H1 (cell line): ENCODE measurements at regions of chr11 and their contacts with region 1.

Region 1: DNA sequence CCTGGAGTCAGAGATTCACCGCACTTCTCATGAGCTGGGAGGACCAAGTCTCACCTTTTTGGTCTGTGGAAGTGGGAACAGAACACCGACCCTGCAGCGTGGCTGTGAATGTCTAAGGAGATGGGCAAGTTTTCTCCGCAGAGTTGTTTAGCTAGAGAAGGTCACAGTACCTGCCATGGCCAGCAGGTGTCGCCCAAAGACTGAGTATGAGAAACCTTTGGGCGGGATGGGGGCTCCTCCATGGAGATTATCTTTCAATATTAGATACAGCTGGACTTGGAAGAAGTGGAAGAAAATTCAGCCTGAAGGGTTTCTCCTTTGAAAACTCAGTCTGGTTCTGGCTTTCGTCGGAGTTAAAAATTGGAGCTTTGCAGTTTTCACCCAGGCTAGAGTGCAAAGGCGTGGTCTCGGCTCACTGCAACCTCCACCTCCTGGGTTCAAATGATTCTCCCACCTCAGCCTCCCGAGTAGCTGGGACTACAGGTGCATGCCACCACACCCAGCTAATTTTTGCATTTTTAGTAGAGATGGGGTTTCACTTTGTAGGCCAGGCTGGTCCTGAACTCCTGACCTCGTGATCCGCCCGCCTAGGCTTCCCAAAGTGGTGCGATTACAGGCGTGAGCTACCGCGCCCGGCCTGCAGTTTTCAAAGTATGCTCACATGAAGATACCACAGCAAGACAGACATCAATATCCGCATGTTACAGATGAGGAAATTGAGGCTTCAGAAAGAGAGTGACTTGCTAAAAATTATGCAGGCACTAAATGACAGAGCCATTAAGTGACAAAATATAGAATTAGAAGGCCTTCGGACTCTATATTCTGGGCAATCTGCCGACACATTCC is 10.7 kb upstream of the DSCAML1 start:
- DNase-seq: peak in 1 of 2 experiments; percentile 92
- H3K4me3 ChIP-seq: no peak overlapping the region
- H3K27ac ChIP-seq: no peak overlapping the region
- H3K4me1 ChIP-seq: no peaks in the 10 kb centered on the region; a peak in 1 of 7 replicates
- H3K27me3 ChIP-seq: no peaks in the 10 kb centered on the region; a peak in 1 of 7 replicates
- CTCF ChIP-seq: peak; percentile 69 to 83 (median 76)
- EP300 ChIP-seq: no peak
- POLR2A ChIP-seq: no peak
- RAD21 ChIP-seq: peak; percentile 89 to 91

Region 2: GRCh38 chr11:117419482-117420142 is 388.1 kb before region 1 on chr11:
- CTCF ChIA-PET with region 1: interaction called, 65 read pairs
- POLR2A ChIA-PET with region 1: no interaction called
- DNase-seq: no peak
- H3K4me3 ChIP-seq: no peak overlapping the region
- H3K27ac ChIP-seq: no peak overlapping the region
- H3K4me1 ChIP-seq: no peaks in the 10 kb centered on the region
- H3K27me3 ChIP-seq: no peaks in the 10 kb centered on the region
- CTCF ChIP-seq: no peak
- EP300 ChIP-seq: no peak
- POLR2A ChIP-seq: no peak
- RAD21 ChIP-seq: no peak

Region 3: GRCh38 chr11:117610045-117610444 is 197.7 kb before region 1 on chr11:
- CTCF ChIA-PET with region 1: interaction called, 18 read pairs
- POLR2A ChIA-PET with region 1: no interaction called
- DNase-seq: no peak
- H3K4me3 ChIP-seq: no peak overlapping the region
- H3K27ac ChIP-seq: no peak overlapping the region
- H3K4me1 ChIP-seq: peaks cover 0 to 34% (median 19%) of the 10 kb centered on the region in 4 experiments; a peak in 5 of 7 replicates
- H3K27me3 ChIP-seq: peaks cover 0 to 4% (median 1%) of the 10 kb centered on the region in 4 experiments; a peak in 3 of 7 replicates
- CTCF ChIP-seq: no peak
- EP300 ChIP-seq: no peak
- POLR2A ChIP-seq: no peak
- RAD21 ChIP-seq: no peak

Region 4: GRCh38 chr11:117654281-117655255 is 153.1 kb before region 1 on chr11:
- CTCF ChIA-PET with region 1: interaction called, 16 read pairs
- POLR2A ChIA-PET with region 1: no interaction called
- DNase-seq: no peak
- H3K4me3 ChIP-seq: no peak overlapping the region
- H3K27ac ChIP-seq: no peak overlapping the region
- H3K4me1 ChIP-seq: no peaks in the 10 kb centered on the region
- H3K27me3 ChIP-seq: no peaks in the 10 kb centered on the region; a peak in 1 of 7 replicates
- CTCF ChIP-seq: no peak
- EP300 ChIP-seq: no peak
- POLR2A ChIP-seq: no peak
- RAD21 ChIP-seq: no peak

Region 5: DNA sequence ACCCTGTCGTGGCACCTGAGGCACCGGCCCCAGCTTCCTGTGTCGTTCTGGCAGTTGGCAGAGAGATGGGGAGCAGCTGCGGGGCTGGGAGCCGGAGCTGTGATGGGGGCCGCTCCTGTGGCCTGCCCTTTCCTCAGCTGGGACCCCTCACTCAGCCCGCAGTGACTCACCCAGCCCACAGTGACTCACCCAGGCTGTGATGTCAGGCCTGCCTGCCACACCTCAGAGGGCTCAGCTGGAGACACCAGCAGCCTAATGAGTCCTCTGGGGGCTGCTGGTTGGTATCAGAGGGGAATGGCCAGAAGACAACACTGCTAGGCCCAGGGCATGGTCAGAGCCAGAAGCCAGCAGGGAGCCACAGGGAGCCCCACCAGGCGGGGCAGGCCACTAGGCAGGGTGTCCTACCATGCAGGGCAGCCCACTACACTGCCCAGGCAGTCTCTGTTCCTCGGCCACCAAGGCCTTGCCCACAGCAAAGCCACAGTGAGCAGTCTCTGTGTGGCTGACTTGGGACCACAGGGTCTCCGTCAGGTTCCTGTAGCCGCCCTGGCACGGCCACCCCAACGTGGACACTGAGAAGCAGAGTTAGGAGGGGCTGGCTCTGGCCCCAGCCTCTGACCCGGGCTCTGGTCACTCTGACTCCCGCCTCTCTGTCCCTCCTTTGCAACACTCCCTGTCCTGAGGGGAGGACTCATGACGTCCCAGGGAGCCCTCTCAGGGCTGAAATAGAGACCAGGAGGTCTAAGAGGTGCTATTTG is 21.1 kb after region 1 on chr11:
- CTCF ChIA-PET with region 1: interaction called, 15 read pairs
- POLR2A ChIA-PET with region 1: no interaction called
- DNase-seq: peak in 1 of 2 experiments; percentile 43
- H3K4me3 ChIP-seq: no peak overlapping the region
- H3K27ac ChIP-seq: no peak overlapping the region; the same call in 1 of the 2 replicates
- H3K4me1 ChIP-seq: peaks cover 0 to 18% (median 10%) of the 10 kb centered on the region in 4 experiments; a peak in 6 of 7 replicates
- H3K27me3 ChIP-seq: no peaks in the 10 kb centered on the region; a peak in 1 of 7 replicates
- CTCF ChIP-seq: no peak
- EP300 ChIP-seq: no peak
- POLR2A ChIP-seq: no peak
- RAD21 ChIP-seq: no peak

Region 6: DNA sequence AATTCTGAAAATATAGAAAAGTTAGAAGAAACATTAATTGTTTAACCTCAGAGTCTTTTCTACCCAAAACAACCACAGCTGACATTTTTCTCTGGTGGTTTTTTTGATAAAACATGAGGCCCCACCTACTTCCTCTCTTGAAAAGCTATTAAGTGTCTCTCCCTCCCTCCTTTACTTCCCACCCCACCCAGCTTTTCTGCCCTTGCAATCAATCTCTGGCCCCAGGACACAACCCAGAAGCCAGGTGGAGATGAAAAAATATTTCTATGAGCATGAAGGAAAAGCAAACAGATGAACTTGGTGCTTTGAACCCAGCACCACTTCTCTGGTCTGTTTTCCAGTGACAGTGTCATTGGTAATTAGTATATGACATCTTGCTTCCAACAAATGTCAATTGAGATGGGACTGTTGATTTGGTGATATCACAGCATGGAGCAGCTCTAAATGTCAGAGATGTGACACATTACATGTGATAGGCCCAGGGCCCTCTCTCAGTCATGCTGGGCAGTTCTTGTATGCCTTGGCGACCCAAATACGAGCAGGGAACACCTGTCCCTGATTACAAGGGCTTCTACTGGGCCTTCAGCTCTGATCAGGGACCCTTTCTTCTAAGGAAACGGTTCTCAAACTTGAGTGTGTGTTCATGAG is 145.4 kb after region 1 on chr11:
- CTCF ChIA-PET with region 1: interaction called, 45 read pairs
- POLR2A ChIA-PET with region 1: no interaction called
- DNase-seq: peak in 1 of 2 experiments; percentile 19
- H3K4me3 ChIP-seq: no peak overlapping the region
- H3K27ac ChIP-seq: no peak overlapping the region
- H3K4me1 ChIP-seq: no peaks in the 10 kb centered on the region
- H3K27me3 ChIP-seq: no peaks in the 10 kb centered on the region
- CTCF ChIP-seq: no peak
- EP300 ChIP-seq: no peak
- POLR2A ChIP-seq: no peak
- RAD21 ChIP-seq: no peak